Left colon (tissue), 2 donors: ENCODE measurements at regions of chr17 and their contacts with region 1.

Region 1: GRCh38 chr17:48463526-48463925 is 33.5 kb upstream of the SKAP1 start:
- DNase-seq: no peak
- ATAC-seq: no peak

Region 2: DNA sequence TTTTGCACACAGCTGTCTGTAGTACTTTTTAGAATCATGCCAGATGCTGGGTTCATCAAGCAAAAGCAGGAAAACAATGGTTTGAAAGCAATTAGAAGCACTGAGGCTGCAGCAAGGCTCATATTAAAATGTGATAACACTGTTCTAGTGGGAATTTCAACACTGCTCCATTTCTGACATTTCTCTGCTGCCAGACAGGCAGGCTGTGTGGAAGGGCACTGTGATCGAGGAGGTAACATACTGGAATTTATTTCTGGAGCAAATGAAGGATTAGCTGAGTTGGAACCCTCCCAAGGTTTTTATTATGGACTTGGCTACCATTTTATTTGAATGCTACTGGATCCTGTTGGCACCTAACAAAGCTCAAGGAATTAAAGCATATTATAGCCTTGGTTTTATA is 100.4 kb before region 1 on chr17:
- intact Hi-C with region 1: loop called in 1 of 2 experiments (anchors 10 kb)
- DNase-seq: no peak
- ATAC-seq: no peak

Region 3: GRCh38 chr17:48392857-48393256 is 70.7 kb before region 1 on chr17:
- intact Hi-C with region 1: loop called in 1 of 2 experiments (anchors 10 kb)
- DNase-seq: no peak
- ATAC-seq: no peak